PC-3 (cell line): ENCODE measurements at regions of chr6 and their contacts with region 1.

Region 1: GRCh38 chr6:10434692-10435376 is 20.0 kb upstream of the TFAP2A start:
- DNase-seq: peak; percentile 68
- ATAC-seq: peak; percentile 47
- H3K4me3 ChIP-seq: peak overlapping the region; percentile 58
- H3K27ac ChIP-seq: no peak overlapping the region
- H3K4me1 ChIP-seq: peaks cover 14% of the 10 kb centered on the region
- H3K27me3 ChIP-seq: no peaks in the 10 kb centered on the region
- CTCF ChIP-seq: peak; percentile 82

Region 2: DNA sequence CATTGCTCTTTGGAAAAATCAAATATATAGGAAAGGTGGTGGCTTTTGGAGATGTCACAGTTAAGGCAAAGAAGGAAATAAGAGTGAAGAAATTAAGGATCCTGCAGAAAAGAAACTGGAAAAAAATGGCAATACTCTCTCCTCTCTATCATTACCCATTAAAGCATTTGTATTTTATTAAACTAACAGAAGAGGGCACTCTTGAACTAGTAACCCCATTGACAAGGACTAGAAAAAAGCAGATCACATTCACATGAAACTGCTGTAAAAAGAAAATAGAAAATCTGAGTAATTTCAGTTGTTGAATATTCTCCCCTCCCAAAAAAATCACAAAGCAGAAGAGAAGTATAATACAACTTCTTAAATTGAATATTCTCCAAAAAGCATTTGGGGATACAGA is 1895.4 kb before region 1 on chr6:
- CTCF ChIA-PET with region 1: interaction called, 4 read pairs
- POLR2A ChIA-PET with region 1: no interaction called
- intact Hi-C with region 1: loop called (anchors 5 kb)
- DNase-seq: peak; percentile 33
- ATAC-seq: peak; percentile 49; the same call in 1 of the 2 replicates
- H3K4me3 ChIP-seq: no peak overlapping the region
- H3K27ac ChIP-seq: no peak overlapping the region
- H3K4me1 ChIP-seq: 0 out of 2 replicates have a peak, but pooled peaks cover 6% of the 10 kb centered on the region
- H3K27me3 ChIP-seq: no peaks in the 10 kb centered on the region; the same call in 1 of the 2 replicates
- CTCF ChIP-seq: peak; percentile 65

Region 3: DNA sequence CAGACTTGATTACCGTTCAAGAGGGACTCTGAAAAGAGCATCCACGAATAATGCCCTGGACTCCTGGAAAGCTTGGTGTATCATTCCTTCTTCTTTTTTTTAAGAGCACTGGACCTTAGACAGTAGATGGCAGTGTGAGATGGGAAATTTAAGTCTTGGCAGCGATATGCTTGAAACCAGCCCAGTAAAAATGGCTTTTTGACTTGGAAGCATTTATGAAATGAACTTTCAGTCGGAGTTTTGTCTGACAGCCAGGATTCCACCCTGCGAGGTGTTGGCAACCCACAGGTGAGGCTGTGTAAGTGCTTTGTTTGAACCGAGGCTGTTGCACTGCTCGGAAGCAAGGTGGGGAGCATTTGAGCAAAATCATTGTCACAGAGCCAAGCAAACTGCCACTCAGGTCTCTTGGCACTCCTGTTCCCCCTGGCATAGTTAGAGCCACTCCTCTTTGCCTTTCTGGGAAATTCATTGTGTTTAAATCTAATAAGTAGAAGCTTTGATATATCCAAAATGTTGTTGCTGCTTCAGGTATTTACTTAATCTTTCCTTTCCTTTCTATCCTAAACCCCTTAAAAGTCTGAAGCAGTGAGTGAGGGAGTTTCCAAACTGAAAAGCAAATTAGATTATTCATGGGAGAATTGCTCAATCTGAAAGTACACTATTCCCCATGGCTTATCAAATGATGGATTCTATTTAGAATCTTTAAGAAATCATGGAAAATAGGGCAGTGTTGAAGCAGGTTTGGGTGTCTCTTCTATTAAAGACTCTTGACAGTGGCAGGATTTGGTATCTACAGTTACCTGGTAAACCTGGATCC is 1726.7 kb before region 1 on chr6:
- CTCF ChIA-PET with region 1: no interaction called
- POLR2A ChIA-PET with region 1: no interaction called
- intact Hi-C with region 1: loop called (anchors 2 kb)
- DNase-seq: peak; percentile 62
- ATAC-seq: no peak
- H3K4me3 ChIP-seq: no peak overlapping the region
- H3K27ac ChIP-seq: no peak overlapping the region
- H3K4me1 ChIP-seq: no peaks in the 10 kb centered on the region
- H3K27me3 ChIP-seq: peaks cover 27% of the 10 kb centered on the region; the same call in 1 of the 2 replicates
- CTCF ChIP-seq: peak; percentile 65

Region 4: DNA sequence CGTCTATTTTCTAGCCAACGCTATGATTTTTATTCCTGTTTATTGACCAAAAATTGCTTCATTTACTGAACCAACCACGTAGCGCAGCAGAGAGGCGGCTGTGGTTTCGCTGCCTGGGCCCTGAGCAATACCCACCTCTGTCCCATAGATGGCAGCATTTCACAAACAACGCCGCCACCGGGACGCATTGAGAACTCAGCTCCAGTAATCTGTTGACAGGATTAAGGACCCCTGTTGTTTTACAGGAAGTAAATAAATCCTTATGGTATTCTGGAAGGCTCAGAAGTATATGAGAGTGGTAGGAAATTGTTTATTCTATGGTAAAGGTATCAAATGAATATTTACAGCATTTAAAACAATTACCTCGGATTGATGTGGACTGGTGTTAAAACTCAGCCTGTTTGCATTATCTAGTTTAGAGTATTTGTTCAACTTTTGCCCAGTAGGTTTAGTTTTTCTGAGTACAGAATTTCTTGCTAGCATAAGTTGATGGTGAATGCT is 1451.6 kb before region 1 on chr6:
- CTCF ChIA-PET with region 1: no interaction called
- POLR2A ChIA-PET with region 1: no interaction called
- intact Hi-C with region 1: loop called (anchors 1 kb)
- DNase-seq: peak; percentile 78
- ATAC-seq: peak; percentile 98
- H3K4me3 ChIP-seq: no peak overlapping the region
- H3K27ac ChIP-seq: no peak overlapping the region
- H3K4me1 ChIP-seq: no peaks in the 10 kb centered on the region; the same call in 1 of the 2 replicates
- H3K27me3 ChIP-seq: peaks cover 21% of the 10 kb centered on the region; the same call in 1 of the 2 replicates
- CTCF ChIP-seq: peak; percentile 96

Region 5: GRCh38 chr6:9540534-9541126 is 894.2 kb before region 1 on chr6:
- CTCF ChIA-PET with region 1: no interaction called
- POLR2A ChIA-PET with region 1: interaction called, 11 read pairs
- intact Hi-C with region 1: no loop called
- DNase-seq: peak; percentile 81
- ATAC-seq: peak; percentile 31; the same call in 1 of the 2 replicates
- H3K4me3 ChIP-seq: no peak overlapping the region
- H3K27ac ChIP-seq: no peak overlapping the region
- H3K4me1 ChIP-seq: no peaks in the 10 kb centered on the region
- H3K27me3 ChIP-seq: no peaks in the 10 kb centered on the region
- CTCF ChIP-seq: peak; percentile 83

Region 6: DNA sequence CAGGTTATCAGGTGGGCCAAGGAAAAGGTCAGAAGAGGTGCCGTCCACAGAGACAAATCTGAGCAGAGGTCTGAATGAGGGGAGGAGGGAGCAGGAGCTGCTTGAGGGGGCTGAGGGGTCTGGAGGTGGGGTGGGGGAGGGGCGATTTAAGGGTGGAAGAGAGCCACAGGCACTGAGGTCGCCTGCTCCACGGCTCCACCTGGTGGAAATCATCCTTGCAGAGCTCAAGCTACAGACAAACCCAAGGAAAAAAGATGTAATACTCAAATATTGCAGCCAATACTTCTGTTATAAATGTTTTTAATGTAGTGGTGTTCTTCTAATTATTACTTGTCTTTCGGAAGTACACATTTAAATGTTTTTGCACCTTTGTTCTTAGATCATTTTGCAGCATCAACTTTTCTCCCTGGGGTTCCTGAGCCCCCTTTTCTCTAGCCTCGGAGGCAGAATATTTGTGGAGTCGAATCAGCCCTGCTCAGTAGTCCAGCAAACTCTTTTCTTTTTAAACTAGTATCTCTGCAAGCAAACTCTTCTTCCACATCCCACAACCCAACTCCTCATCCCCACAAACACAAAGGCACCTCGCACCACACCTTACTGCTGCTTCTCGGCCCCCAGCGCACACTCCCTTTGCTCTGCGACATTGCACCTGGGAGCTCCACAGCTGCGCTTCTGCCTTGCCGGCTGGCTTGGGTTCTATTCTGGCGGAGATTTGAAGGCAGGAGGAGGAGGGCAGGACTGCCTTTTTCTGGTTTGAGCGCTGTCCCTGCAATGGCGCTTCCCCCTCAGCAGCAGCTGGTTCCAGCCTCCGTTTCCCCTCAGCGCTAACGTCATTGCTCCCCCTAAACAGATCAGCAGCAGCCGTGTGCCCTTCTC is 31.0 kb after region 1 on chr6:
- CTCF ChIA-PET with region 1: interaction called, 3 read pairs
- POLR2A ChIA-PET with region 1: no interaction called
- intact Hi-C with region 1: loop called (anchors 1 kb)
- DNase-seq: peak; percentile 75
- ATAC-seq: peak; percentile 76
- H3K4me3 ChIP-seq: no peak overlapping the region
- H3K27ac ChIP-seq: no peak overlapping the region
- H3K4me1 ChIP-seq: peaks cover 11% of the 10 kb centered on the region; the same call in 1 of the 2 replicates
- H3K27me3 ChIP-seq: no peaks in the 10 kb centered on the region
- CTCF ChIP-seq: peak; percentile 71

Region 7: GRCh38 chr6:10521104-10521808 is 86.4 kb after region 1 on chr6 and contains the start of gene GCNT2:
- CTCF ChIA-PET with region 1: no interaction called
- POLR2A ChIA-PET with region 1: no interaction called
- intact Hi-C with region 1: no loop called
- DNase-seq: peak; percentile 22
- ATAC-seq: peak; percentile 39; the same call in 1 of the 2 replicates
- H3K4me3 ChIP-seq: no peak within 1 kb of the TSS
- H3K27ac ChIP-seq: peak within 1 kb of the TSS; percentile 1; the same call in 1 of the 2 replicates
- H3K4me1 ChIP-seq: peaks cover 22% of the 10 kb centered on the region
- H3K27me3 ChIP-seq: no peaks in the 10 kb centered on the region
- CTCF ChIP-seq: no peak
- total RNA-seq, gene GCNT2: 15.5 and 18.3 TPM in 2 replicates